GM13976 (cell line): ENCODE measurements at regions of chr14 and their contacts with region 1.

Region 1: GRCh38 chr14:51219473-51220448 is 20.3 kb upstream of the TMX1 start:
- DNase-seq: no peak
- CTCF ChIP-seq: peak; percentile 39

Region 2: DNA sequence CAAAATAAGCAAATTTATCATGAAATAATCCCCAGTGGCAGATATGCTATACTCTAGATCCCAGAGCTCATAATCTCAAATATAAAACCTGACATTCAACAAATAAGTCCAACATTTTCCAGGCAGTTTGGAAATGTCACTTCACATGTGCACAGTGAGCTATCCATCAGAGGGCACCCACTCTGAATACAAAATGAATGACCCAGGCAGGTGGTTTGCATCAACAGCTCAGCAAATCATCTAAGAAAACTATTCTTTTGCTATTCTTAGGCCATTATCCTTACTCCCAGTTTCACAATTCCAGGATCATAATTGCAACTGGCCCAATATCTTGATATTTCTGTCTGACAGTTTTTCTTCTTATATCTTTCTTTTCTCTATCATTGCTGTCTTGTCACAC is 163.3 kb before region 1 on chr14:
- in situ Hi-C with region 1: no loop called
- DNase-seq: no peak
- CTCF ChIP-seq: no peak

Region 3: GRCh38 chr14:51157012-51157411 is 62.7 kb before region 1 on chr14:
- in situ Hi-C with region 1: loop called (anchors 10 kb)
- DNase-seq: peak; percentile 29
- CTCF ChIP-seq: peak; percentile 33